Activated naive CD4-positive, alpha-beta T cell treated with anti-CD3 and anti-CD28 coated beads, Interleukin-2, amount 10 ng/mL, durations not matched to agents 7 days and 5 days (primary cell): ENCODE measurements at regions of chr11 and their contacts with region 1.

Region 1: GRCh38 chr11:22670830-22671229 is 4.4 kb downstream of the GAS2 start:
- DNase-seq: no peak
- H3K4me3 Mint-ChIP-seq: no peak overlapping the region
- H3K27ac Mint-ChIP-seq: no peak overlapping the region
- H3K4me1 Mint-ChIP-seq: peaks cover 17% of the 10 kb centered on the region
- H3K27me3 Mint-ChIP-seq: peaks cover 40% of the 10 kb centered on the region

Region 2: DNA sequence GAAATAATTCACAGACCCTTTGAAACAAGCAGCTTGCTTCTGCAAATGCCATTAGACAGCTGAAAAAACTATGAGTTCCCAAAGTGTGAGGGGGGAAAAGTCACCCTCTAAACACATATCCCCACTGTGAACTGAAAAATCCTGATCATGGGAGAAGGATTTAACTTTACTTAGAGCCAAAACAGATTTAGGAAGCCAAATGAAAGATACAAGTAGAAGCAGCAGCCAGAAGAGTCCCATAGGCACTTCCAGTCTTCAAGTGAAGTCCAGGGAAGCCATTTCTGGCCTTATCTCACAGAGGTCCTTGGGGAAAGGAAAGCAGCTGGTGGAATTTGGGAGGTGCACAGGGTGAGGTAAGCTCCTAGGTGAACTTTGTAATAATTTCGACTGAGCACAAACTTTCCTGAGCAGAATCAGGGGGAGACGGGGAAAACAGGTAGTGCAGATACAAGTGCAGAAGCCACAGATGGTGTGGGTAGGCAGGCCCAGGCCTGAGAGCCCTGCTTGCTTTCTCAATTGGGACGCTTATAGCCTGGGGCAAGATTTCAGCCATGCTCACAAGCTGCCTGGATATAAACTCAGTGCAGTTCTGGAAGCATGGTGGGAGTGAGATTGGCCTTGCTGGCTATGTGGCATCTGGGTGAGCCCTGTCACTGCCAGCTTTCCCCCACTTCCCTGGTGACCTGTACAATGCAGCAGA is 40.4 kb after region 1 on chr11:
- CTCF ChIA-PET with region 1: no interaction called
- DNase-seq: no peak
- H3K4me3 Mint-ChIP-seq: no peak overlapping the region
- H3K27ac Mint-ChIP-seq: no peak overlapping the region
- H3K4me1 Mint-ChIP-seq: no peaks in the 10 kb centered on the region
- H3K27me3 Mint-ChIP-seq: no peaks in the 10 kb centered on the region

Region 3: GRCh38 chr11:22787551-22788162 is 116.8 kb after region 1 on chr11:
- CTCF ChIA-PET with region 1: interaction called, 25 read pairs
- DNase-seq: peak; percentile 44
- H3K4me3 Mint-ChIP-seq: no peak overlapping the region
- H3K27ac Mint-ChIP-seq: no peak overlapping the region
- H3K4me1 Mint-ChIP-seq: no peaks in the 10 kb centered on the region
- H3K27me3 Mint-ChIP-seq: no peaks in the 10 kb centered on the region